Esophagus muscularis mucosa (tissue), 4 donors: ENCODE measurements at regions of chr14 and their contacts with region 1.

Region 1: GRCh38 chr14:70359181-70360090 is at the start of gene COX16:
- DNase-seq: peak; percentile 96
- H3K4me3 ChIP-seq: peak within 1 kb of the TSS; percentile 63 to 79 (median 72)
- H3K27ac ChIP-seq: peak within 1 kb of the TSS; percentile 82 to 89 (median 84)
- H3K4me1 ChIP-seq: peaks cover 9 to 40% (median 37%) of the 10 kb centered on the region in 4 donors
- H3K27me3 ChIP-seq: no peaks in the 10 kb centered on the region
- CTCF ChIP-seq: peak in 1 of 3 experiments; percentile 17
- EP300 ChIP-seq: no peak
- POLR2A ChIP-seq: no peak
- total RNA-seq, gene COX16: 9.2 to 19.3 (median 15.8) TPM

Region 2: DNA sequence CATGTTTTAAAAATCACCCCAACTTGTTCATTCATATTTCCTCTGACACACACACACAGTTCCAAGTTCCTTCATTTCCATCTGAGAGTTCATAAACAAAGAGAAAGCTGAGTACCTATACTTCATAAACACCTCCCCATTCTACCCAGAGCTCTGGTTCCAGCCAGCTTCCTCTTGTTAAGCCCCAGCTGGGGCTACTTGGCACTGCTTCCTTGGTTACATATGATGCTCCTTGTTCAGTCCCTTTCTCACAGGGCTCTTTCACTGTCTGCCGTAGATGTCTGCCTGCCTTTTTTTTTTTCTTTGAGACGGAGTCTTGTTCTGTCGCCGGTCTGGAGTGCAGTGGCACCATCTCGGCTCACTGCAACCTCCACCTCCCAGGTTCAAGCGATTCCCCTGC is 77.5 kb before region 1 on chr14:
- intact Hi-C with region 1: no loop called
- DNase-seq: no peak
- H3K4me3 ChIP-seq: no peak overlapping the region
- H3K27ac ChIP-seq: no peak overlapping the region
- H3K4me1 ChIP-seq: no peaks in the 10 kb centered on the region
- H3K27me3 ChIP-seq: peaks cover 0 to 21% (median 0%) of the 10 kb centered on the region in 4 donors
- CTCF ChIP-seq: no peak
- EP300 ChIP-seq: no peak
- POLR2A ChIP-seq: no peak

Region 3: GRCh38 chr14:70468731-70469130 is 109.3 kb after region 1 on chr14:
- intact Hi-C with region 1: no loop called
- DNase-seq: no peak
- H3K4me3 ChIP-seq: no peak overlapping the region
- H3K27ac ChIP-seq: no peak overlapping the region
- H3K4me1 ChIP-seq: no peaks in the 10 kb centered on the region
- H3K27me3 ChIP-seq: no peaks in the 10 kb centered on the region
- CTCF ChIP-seq: no peak
- EP300 ChIP-seq: no peak
- POLR2A ChIP-seq: no peak

Region 4: GRCh38 chr14:70809543-70810244 is 450.3 kb after region 1 on chr14:
- intact Hi-C with region 1: loop called (anchors 10 kb)
- DNase-seq: no peak
- H3K4me3 ChIP-seq: peak overlapping the region; percentile 76 to 90 (median 82)
- H3K27ac ChIP-seq: peak overlapping the region; percentile 80 to 83 (median 83)
- H3K4me1 ChIP-seq: peaks cover 16 to 27% (median 23%) of the 10 kb centered on the region in 4 donors
- H3K27me3 ChIP-seq: peaks cover 0 to 30% (median 0%) of the 10 kb centered on the region in 4 donors
- CTCF ChIP-seq: no peak
- EP300 ChIP-seq: no peak
- POLR2A ChIP-seq: no peak